ENCODE measurements at regions of chr13 and their contacts with region 1.

Region 1: DNA sequence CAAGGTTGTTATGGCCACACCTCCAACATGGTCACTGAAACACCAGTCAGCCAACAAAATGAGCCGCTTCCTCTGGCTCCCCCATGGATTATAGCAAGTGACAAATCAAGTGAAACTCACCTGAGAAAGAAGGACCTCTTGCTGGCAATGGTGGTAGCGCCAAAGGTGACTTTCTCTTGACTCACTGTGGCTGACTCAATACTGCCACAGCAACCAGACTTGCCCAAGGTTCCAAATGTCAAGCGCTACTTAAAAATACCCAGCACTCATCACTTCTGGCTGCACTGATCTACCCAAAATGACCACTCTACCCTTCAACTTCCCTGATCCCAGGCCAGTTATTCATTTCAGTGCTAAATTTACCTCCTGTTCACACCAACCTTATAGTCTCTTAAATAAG is 495.5 kb downstream of the FOXO1 start:
- DNase-seq: peak; percentile 82
- H3K4me3 Mint-ChIP-seq: no peak overlapping the region
- H3K27ac Mint-ChIP-seq: peak overlapping the region; percentile 9
- H3K4me1 Mint-ChIP-seq: peaks cover 41% of the 10 kb centered on the region
- H3K27me3 Mint-ChIP-seq: no peaks in the 10 kb centered on the region

Region 2: DNA sequence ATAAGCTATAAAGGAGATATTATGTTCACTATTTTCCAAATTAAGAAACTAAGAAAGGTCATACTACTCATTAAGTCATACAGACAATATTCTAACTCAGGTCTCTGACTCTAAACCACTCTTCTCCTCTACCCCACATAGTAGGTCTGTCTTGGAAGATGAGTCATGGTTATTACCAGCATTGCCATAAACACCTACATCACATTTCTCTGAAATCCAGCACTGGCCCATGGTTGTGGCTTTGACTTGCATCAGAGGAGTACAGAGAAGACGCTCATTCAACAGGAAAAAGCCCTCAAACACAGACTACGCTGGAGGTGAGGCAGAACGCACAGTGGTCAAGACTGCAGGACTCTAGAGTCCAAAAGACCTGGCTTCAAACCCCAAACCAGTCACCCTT is 38.7 kb before region 1 on chr13:
- CTCF ChIA-PET with region 1: interaction called, 5 read pairs
- intact Hi-C with region 1: loop called (anchors 1 kb)
- DNase-seq: peak; percentile 87
- H3K4me3 Mint-ChIP-seq: no peak overlapping the region
- H3K27ac Mint-ChIP-seq: peak overlapping the region; percentile 66
- H3K4me1 Mint-ChIP-seq: peaks cover 25% of the 10 kb centered on the region
- H3K27me3 Mint-ChIP-seq: no peaks in the 10 kb centered on the region

Measured in activated naive CD4-positive, alpha-beta T cell treated with anti-CD3 and anti-CD28 coated beads for 36 hours (primary cell).